Activated naive CD4-positive, alpha-beta T cell treated with anti-CD3 and anti-CD28 coated beads for 36 hours (primary cell): ENCODE measurements at regions of chr6 and their contacts with region 1.

Region 1: GRCh38 chr6:135183532-135184440 is 2.7 kb downstream of the MYB start:
- DNase-seq: peak; percentile 92
- H3K4me3 Mint-ChIP-seq: peak overlapping the region; percentile 89
- H3K27ac Mint-ChIP-seq: peak overlapping the region; percentile 89
- H3K4me1 Mint-ChIP-seq: peaks cover 15% of the 10 kb centered on the region
- H3K27me3 Mint-ChIP-seq: no peaks in the 10 kb centered on the region

Region 2: DNA sequence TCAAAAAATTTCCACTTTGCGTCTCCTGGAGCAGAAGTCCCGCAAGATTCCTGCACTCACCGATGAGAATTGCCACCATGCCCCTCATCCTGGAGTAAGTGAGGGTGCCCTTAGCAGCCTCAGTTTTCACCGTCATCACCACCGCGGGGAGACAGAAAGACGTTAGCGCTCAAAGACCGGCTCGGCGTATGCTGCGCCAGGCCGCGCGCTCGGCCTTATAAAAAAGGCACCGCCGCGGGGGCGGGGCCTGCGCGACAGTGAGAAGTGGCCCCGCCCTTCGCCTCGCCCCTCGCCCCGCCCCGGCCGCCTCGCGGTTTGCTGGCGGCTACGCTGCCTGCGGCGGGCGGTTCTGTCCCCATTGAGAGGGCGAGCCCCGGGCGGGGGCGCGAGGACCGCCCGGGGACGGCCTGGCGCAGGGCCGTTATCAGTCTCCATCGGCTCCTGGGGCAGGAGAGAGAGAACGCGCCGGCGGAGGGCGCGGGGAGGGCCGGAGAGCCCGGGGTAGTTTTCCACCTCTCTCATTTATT is 1009.1 kb before region 1 on chr6:
- CTCF ChIA-PET with region 1: no interaction called
- intact Hi-C with region 1: loop called (anchors 5 kb)
- DNase-seq: peak; percentile 95
- H3K4me3 Mint-ChIP-seq: peak overlapping the region; percentile 97
- H3K27ac Mint-ChIP-seq: peak overlapping the region; percentile 97
- H3K4me1 Mint-ChIP-seq: peaks cover 60% of the 10 kb centered on the region
- H3K27me3 Mint-ChIP-seq: no peaks in the 10 kb centered on the region

Region 3: DNA sequence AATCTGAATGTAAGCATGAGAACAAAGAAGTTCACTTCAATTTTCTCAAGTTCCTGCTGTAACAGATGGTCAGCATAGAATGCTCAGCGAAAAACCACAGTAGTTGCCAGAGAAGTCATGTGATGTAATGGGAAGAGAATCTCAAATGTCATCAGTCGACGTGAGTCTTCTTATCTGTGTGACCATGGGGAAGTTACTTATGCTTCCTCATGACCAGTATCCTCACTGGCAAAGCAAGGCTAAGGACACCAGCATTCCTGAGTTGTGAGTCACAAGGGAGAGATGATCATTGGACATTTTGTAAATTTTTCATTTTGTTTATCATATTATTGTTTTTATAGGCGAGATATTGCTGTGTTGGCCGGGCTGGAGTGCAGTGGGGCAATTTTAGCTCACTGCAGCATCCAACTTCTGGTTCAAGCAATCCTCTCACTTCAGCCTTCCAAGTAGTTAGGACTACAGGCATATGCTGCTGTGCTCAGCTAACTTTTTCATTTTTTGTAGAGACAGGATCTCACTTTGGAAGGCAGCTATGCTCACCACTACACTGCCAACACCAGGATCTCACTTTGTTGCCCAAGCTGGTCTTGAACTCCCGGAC is 887.7 kb before region 1 on chr6:
- CTCF ChIA-PET with region 1: no interaction called
- intact Hi-C with region 1: no loop called
- DNase-seq: no peak
- H3K4me3 Mint-ChIP-seq: no peak overlapping the region
- H3K27ac Mint-ChIP-seq: no peak overlapping the region
- H3K4me1 Mint-ChIP-seq: peaks cover 12% of the 10 kb centered on the region
- H3K27me3 Mint-ChIP-seq: no peaks in the 10 kb centered on the region

Region 4: DNA sequence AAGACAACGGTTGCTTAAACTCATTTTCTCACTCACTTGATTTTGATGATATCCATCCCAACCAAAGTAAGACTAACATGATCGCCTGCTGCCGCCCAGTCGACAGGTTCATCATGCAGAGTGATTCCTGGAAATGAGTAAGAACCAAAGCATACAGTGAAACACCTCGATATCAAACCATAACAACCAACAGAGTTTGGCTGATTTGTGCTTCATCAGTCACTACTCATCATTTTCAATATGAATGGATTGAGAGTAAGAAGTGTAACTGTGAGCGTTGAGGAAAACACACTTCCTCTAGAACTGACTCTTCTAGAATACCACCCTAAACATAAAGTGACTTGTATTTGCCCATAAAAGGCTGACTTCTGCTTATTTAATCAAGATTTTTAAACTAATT is 204.6 kb before region 1 on chr6:
- CTCF ChIA-PET with region 1: interaction called, 4 read pairs
- intact Hi-C with region 1: loop called (anchors 1 kb)
- DNase-seq: peak; percentile 72
- H3K4me3 Mint-ChIP-seq: no peak overlapping the region
- H3K27ac Mint-ChIP-seq: peak overlapping the region; percentile 33
- H3K4me1 Mint-ChIP-seq: peaks cover 42% of the 10 kb centered on the region
- H3K27me3 Mint-ChIP-seq: no peaks in the 10 kb centered on the region

Region 5: DNA sequence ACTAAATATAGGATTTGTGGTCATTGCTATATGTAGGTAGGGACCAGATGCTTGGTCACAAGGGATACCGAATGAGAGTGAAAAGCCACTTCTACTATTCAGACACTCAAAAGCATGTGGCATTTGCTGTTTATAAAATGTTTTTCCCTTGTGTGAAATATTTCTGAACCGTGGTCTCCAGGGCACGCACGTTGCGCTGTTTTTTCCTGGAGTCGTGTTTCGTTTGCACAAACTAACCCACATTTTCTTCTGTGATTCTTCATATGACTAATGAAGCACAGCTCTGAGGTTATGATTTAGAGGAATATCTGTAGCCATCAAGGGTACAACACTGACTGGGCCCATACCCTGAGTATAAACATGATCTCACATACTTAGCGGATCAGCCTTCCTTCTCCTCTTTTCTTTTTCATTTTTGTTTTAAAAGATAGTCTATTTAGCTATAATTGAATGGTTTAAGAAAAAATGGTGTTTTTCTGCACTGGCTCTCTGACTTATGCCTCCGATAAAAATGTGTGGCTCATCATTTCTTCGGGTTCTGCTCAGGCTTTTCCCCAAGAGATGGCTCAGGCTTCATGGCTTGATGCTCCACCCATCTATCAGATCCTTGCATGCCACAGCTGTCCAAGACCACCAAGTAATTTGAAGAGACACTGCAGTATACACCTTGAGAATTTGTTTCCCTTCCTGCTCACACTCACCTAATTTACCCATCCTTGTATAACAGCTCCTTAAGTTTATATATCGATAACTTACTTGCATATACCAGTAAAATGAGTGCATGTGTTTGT is 69.2 kb before region 1 on chr6:
- CTCF ChIA-PET with region 1: interaction called, 4 read pairs
- intact Hi-C with region 1: loop called (anchors 1 kb)
- DNase-seq: peak; percentile 75
- H3K4me3 Mint-ChIP-seq: no peak overlapping the region
- H3K27ac Mint-ChIP-seq: peak overlapping the region; percentile 74
- H3K4me1 Mint-ChIP-seq: peaks cover 72% of the 10 kb centered on the region
- H3K27me3 Mint-ChIP-seq: no peaks in the 10 kb centered on the region

Region 6: DNA sequence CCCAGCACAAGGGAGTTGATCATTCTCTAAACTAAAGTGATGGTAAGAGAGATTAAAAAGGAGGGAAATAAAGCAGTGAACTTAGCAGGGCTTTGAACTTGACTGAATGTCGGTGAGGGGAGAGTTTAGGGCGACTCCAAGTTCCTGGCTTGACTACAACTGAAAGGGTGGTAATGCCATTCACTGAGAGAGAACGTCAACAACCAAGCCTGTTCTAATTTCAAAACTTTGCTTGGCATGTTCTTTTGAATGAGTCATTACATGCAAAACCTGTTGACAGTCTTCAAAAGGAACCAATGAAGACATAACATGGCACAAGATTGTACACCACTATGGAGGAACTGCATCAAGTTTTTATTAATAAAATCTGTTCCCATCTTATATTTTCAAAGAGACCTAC is 12.9 kb before region 1 on chr6:
- CTCF ChIA-PET with region 1: interaction called, 8 read pairs
- intact Hi-C with region 1: loop called (anchors 1 kb)
- DNase-seq: peak; percentile 65
- H3K4me3 Mint-ChIP-seq: no peak overlapping the region
- H3K27ac Mint-ChIP-seq: peak overlapping the region; percentile 88
- H3K4me1 Mint-ChIP-seq: peaks cover 17% of the 10 kb centered on the region
- H3K27me3 Mint-ChIP-seq: no peaks in the 10 kb centered on the region

Region 7: GRCh38 chr6:135438907-135439535 is 255.2 kb after region 1 on chr6:
- CTCF ChIA-PET with region 1: no interaction called
- intact Hi-C with region 1: loop called (anchors 5 kb)
- DNase-seq: no peak
- H3K4me3 Mint-ChIP-seq: peak overlapping the region; percentile 7
- H3K27ac Mint-ChIP-seq: no peak overlapping the region
- H3K4me1 Mint-ChIP-seq: peaks cover 22% of the 10 kb centered on the region
- H3K27me3 Mint-ChIP-seq: no peaks in the 10 kb centered on the region